Caco-2 (cell line): ENCODE measurements at regions of chr5 and their contacts with region 1.

Region 1: GRCh38 chr5:124524552-124525232 is 221.7 kb downstream of the ZNF608 start:
- DNase-seq: no peak
- H3K4me3 ChIP-seq: no peak overlapping the region
- H3K4me3 Mint-ChIP-seq: no peak overlapping the region
- H3K27ac Mint-ChIP-seq: peak overlapping the region; percentile 14
- H3K4me1 ChIP-seq: peaks cover 26% of the 10 kb centered on the region
- H3K4me1 Mint-ChIP-seq: peaks cover 25% of the 10 kb centered on the region
- H3K27me3 ChIP-seq: no peaks in the 10 kb centered on the region
- H3K27me3 Mint-ChIP-seq: no peaks in the 10 kb centered on the region
- CTCF ChIP-seq: no peak

Region 2: DNA sequence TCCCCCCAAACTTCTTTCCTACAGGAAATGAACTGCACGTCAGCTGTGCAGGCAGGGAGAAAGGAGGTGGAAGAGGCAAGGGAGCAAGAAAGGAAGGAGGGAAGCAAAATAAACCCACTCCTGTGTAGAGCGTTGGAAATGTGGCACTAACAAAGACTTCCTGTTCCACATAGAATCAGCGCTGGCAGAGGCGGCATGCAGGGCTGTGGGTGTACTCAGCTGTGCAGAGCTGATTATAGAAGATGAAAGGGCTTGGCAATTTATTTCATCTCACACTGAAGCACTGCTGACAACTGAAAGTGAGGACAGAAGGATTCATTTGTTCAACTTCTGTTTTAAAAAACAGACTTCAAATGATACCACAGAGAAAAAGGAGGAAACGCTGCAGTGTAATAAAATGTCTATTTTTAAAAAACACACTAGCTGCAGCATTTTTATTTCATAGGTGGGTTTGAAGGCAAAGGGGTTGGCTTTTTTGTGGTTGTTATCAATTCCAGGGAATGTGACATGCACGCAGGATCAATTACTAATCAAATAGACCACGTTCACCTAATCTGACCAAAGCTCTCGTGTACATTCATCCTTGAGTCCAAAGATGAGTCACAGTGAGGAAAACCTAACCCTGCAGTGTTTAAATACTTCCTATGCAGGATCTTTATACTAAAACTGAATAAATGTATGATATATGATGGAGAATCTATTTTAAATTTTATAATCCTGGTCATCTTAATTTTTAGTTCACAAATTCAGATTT is 361.7 kb before region 1 on chr5:
- CTCF ChIA-PET with region 1: no interaction called
- POLR2A ChIA-PET with region 1: no interaction called
- intact Hi-C with region 1: loop called (anchors 5 kb)
- DNase-seq: no peak
- H3K4me3 ChIP-seq: no peak overlapping the region
- H3K4me3 Mint-ChIP-seq: peak overlapping the region; percentile 44
- H3K27ac Mint-ChIP-seq: peak overlapping the region; percentile 31
- H3K4me1 ChIP-seq: peaks cover 17% of the 10 kb centered on the region
- H3K4me1 Mint-ChIP-seq: peaks cover 17% of the 10 kb centered on the region
- H3K27me3 ChIP-seq: no peaks in the 10 kb centered on the region
- H3K27me3 Mint-ChIP-seq: no peaks in the 10 kb centered on the region
- CTCF ChIP-seq: no peak

Region 3: DNA sequence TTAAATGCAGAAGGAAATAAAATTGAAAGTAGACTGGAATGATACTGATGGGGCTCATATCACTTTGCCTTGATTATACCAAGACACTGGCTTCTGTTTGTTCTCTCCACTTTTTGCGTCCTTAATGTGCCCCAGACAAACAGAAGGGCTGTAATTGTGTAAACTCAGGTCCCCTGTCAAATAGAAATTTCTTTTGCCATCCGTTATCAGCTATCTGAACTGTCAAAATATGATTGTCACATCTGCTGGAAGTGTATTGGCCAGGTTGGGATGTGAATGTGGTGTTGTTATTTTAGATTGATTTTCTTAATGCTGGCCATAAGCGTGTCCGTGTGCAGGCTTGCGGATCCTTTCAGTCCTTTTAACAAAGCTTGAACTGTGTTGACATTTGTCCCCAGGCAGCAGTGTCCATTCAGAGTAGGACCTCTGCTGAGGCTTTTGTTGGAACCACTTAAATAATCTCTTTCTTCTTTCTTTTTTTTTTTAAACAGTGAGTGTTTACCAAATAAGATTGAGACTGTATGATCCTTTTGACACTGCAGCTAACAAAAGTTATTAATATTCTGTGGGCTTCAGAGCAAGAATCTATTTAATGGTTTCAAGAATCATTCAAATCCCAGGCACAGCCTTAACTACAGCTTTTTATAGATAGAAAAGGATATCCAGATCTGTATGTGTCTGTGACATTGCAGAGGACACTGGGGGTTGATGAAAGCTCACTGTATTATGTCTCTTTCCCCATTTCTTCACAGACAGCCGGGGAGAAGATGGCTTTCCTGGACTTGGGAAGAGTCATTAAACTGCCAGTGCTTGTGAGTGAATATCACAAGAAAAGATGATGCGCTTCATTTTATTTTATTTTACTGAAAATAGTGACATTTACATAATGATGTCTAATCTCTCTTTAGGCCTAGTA is 50.1 kb after region 1 on chr5:
- CTCF ChIA-PET with region 1: no interaction called
- POLR2A ChIA-PET with region 1: no interaction called
- intact Hi-C with region 1: no loop called
- DNase-seq: no peak
- H3K4me3 ChIP-seq: no peak overlapping the region
- H3K4me3 Mint-ChIP-seq: no peak overlapping the region
- H3K27ac Mint-ChIP-seq: no peak overlapping the region
- H3K4me1 ChIP-seq: peaks cover 13% of the 10 kb centered on the region
- H3K4me1 Mint-ChIP-seq: peaks cover 37% of the 10 kb centered on the region
- H3K27me3 ChIP-seq: no peaks in the 10 kb centered on the region
- H3K27me3 Mint-ChIP-seq: no peaks in the 10 kb centered on the region
- CTCF ChIP-seq: no peak

Region 4: DNA sequence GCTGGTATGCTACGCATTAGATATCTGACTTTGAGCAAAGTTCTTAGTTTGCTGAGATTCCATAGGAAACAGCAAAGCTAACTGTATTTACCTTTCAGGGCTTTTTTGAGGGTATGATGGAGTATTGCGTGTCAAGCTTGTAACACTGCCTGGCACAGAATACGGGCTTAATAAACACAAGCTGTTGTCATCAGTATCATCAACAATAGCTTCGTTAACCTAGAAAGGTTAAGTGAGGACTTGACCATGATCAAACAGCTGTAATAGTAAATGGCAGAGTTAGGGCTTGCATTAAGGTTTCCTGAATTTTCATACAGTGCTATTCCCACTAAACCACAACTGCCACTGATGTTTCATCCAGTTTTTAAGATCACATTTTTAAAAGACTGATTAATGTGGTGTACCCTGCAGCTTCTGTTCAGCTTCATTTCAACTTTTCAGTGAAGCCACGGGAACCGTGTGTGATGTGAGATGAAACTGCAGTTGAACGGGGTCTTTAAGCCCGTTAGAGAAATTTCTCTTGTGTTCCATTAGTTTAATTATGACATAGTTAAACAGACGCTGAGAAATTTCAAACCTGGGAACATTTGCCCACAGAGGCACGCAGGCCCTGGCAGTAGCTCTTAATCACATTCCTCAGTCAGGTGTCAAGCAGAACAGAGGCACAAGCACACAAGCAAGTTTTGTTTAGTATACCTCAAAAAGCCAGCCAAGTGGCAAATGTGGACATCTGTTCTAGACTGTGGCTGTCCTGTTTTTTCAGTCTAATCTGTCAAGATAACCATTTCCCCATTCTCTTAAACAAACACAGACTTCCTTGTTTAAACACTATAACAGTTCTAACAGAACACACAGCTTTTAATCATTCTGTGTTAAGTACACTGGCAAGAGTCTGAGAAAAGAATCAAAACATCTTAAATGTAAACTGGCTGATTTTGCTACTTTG is 74.6 kb after region 1 on chr5:
- CTCF ChIA-PET with region 1: interaction called, 3 read pairs
- POLR2A ChIA-PET with region 1: no interaction called
- intact Hi-C with region 1: loop called (anchors 1 kb)
- DNase-seq: peak; percentile 55 to 59
- H3K4me3 ChIP-seq: no peak overlapping the region
- H3K4me3 Mint-ChIP-seq: no peak overlapping the region
- H3K27ac Mint-ChIP-seq: no peak overlapping the region
- H3K4me1 ChIP-seq: peaks cover 29% of the 10 kb centered on the region
- H3K4me1 Mint-ChIP-seq: peaks cover 13% of the 10 kb centered on the region
- H3K27me3 ChIP-seq: no peaks in the 10 kb centered on the region
- H3K27me3 Mint-ChIP-seq: no peaks in the 10 kb centered on the region
- CTCF ChIP-seq: no peak

Region 5: GRCh38 chr5:124677374-124678351 is 153.0 kb after region 1 on chr5:
- CTCF ChIA-PET with region 1: no interaction called
- POLR2A ChIA-PET with region 1: no interaction called
- intact Hi-C with region 1: loop called (anchors 1 kb)
- DNase-seq: no peak
- H3K4me3 ChIP-seq: no peak overlapping the region
- H3K4me3 Mint-ChIP-seq: no peak overlapping the region
- H3K27ac Mint-ChIP-seq: peak overlapping the region; percentile 37
- H3K4me1 ChIP-seq: peaks cover 59% of the 10 kb centered on the region
- H3K4me1 Mint-ChIP-seq: peaks cover 42% of the 10 kb centered on the region
- H3K27me3 ChIP-seq: no peaks in the 10 kb centered on the region
- H3K27me3 Mint-ChIP-seq: no peaks in the 10 kb centered on the region
- CTCF ChIP-seq: no peak